ENCODE measurements at regions of chr6 and their contacts with region 1.

Region 1: DNA sequence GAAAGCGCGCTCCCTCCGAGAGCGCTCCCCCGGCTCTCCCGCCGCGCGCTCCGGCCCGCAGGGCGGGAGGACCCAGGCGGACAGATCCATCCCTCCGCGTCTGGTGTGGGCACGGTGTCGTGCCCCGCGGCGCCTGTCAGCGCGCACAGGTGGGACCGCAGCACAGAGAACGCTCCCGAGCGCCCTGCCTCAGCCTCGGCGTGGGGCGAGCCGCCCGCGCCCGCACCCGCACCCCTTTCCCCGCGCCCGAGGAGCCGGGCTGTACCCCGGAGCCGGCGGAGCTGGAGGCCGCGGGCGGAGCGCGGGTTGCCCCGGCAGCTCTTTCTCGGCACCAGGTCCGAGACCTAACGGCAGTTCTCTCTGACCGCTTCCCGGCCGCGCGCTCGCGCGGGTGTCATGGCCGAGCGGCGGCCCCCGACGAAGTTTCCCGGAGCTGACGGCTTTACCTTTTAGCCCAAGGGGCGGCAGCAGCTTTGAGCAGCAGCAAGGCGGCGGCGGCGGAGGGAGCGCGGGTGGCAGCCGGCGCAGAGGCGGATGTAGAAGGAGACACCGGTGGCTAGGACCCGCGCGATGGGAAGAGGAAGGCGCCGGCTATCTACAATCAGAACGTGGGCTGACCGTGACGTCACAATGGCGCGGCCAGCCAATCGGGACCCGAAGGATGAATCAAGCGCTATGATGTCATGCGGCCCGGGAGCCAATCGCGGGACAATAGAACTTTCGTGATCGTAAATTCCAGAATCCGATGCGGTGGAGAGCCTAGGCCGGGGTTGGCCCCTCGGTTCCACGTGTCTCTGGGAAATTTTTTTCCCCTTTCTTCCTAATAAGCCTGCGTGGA is at the start of gene ELOVL5:
- DNase-seq: peak; percentile 82 to 99 (median 93)
- ATAC-seq: peak; percentile 76
- H3K4me3 ChIP-seq: peak within 1 kb of the TSS; percentile 83 to 91
- H3K4me3 Mint-ChIP-seq: peak within 1 kb of the TSS; percentile 96
- H3K27ac ChIP-seq: peak within 1 kb of the TSS; percentile 80 to 94
- H3K27ac Mint-ChIP-seq: peak within 1 kb of the TSS; percentile 96
- H3K4me1 ChIP-seq: peaks cover 38% of the 10 kb centered on the region
- H3K4me1 Mint-ChIP-seq: peaks cover 48% of the 10 kb centered on the region
- H3K27me3 ChIP-seq: no peaks in the 10 kb centered on the region
- H3K27me3 Mint-ChIP-seq: no peaks in the 10 kb centered on the region
- CTCF ChIP-seq: no peak
- total RNA-seq, gene ELOVL5: 79.1 to 82.7 TPM

Region 2: GRCh38 chr6:52995913-52996645 is 352.5 kb before region 1 on chr6:
- CTCF ChIA-PET with region 1: no interaction called
- POLR2A ChIA-PET with region 1: interaction called, 7 read pairs
- intact Hi-C with region 1: loop called in 1 of 2 experiments (anchors 5 kb)
- DNase-seq: peak in 7 of 9 experiments; percentile 27 to 74 (median 54)
- ATAC-seq: peak; percentile 8
- H3K4me3 ChIP-seq: peak overlapping the region; percentile 41 to 75
- H3K4me3 Mint-ChIP-seq: peak overlapping the region; percentile 94
- H3K27ac ChIP-seq: peak overlapping the region; percentile 57 to 100
- H3K27ac Mint-ChIP-seq: peak overlapping the region; percentile 99
- H3K4me1 ChIP-seq: peaks cover 6% of the 10 kb centered on the region
- H3K4me1 Mint-ChIP-seq: peaks cover 22% of the 10 kb centered on the region
- H3K27me3 ChIP-seq: no peaks in the 10 kb centered on the region
- H3K27me3 Mint-ChIP-seq: peaks cover 7% of the 10 kb centered on the region
- CTCF ChIP-seq: no peak

Region 3: GRCh38 chr6:53134601-53135235 is 213.9 kb before region 1 on chr6:
- CTCF ChIA-PET with region 1: no interaction called
- POLR2A ChIA-PET with region 1: no interaction called
- intact Hi-C with region 1: no loop called
- DNase-seq: no peak
- ATAC-seq: no peak
- H3K4me3 ChIP-seq: no peak overlapping the region
- H3K4me3 Mint-ChIP-seq: no peak overlapping the region
- H3K27ac ChIP-seq: no peak overlapping the region
- H3K27ac Mint-ChIP-seq: no peak overlapping the region
- H3K4me1 ChIP-seq: peaks cover 4% of the 10 kb centered on the region
- H3K4me1 Mint-ChIP-seq: peaks cover 4% of the 10 kb centered on the region
- H3K27me3 ChIP-seq: no peaks in the 10 kb centered on the region
- H3K27me3 Mint-ChIP-seq: peaks cover 10% of the 10 kb centered on the region
- CTCF ChIP-seq: no peak

Region 4: DNA sequence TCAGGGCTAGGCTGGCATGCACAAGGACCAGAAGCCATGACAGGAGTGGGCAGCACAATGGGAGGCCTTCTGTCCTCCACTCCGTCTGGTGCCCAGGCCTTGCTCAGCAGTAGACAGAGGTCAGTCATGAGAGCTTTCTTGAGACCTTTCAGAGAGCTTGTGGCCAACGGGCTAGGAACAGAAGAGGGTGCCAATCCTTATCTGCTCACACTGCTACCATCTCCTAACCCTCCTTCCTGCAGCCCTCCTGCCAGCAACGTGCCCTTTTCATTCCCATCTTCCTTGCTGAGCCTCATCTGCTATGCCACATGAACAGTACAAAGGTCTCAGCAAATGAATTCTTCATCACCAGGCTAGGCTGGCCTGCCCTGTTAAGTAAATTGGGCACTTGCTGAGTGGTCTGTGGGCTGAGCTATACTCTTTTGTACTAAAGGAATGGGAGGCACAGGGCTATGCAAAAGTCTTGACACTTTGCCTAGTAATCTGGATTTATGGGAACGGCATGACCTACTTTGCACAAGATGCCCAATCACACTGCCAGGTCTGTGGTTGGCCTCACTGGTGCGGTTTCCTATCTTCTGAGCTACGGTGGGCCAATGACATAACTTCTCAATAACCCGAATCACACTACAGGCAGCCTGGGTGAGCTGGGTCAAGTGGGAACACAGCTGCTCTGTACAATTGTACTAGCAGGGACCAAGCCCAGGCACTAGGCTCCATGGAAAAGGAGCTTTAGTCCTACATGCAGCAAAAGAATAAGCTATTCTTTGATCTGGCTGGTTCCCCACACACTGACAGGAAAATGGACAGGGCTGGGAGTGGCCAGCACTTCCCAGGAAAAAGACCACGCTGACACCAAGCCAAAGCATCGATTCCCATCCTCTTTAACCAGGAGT is 47.7 kb before region 1 on chr6:
- CTCF ChIA-PET with region 1: interaction called, 6 read pairs
- POLR2A ChIA-PET with region 1: interaction called, 22 read pairs
- intact Hi-C with region 1: loop called in 1 of 2 experiments (anchors 2 kb)
- DNase-seq: peak in 5 of 9 experiments; percentile 29 to 72 (median 44)
- ATAC-seq: peak; percentile 22
- H3K4me3 ChIP-seq: no peak overlapping the region
- H3K4me3 Mint-ChIP-seq: peak overlapping the region; percentile 49
- H3K27ac ChIP-seq: no peak overlapping the region
- H3K27ac Mint-ChIP-seq: peak overlapping the region; percentile 89
- H3K4me1 ChIP-seq: peaks cover 39% of the 10 kb centered on the region
- H3K4me1 Mint-ChIP-seq: peaks cover 77% of the 10 kb centered on the region
- H3K27me3 ChIP-seq: no peaks in the 10 kb centered on the region
- H3K27me3 Mint-ChIP-seq: no peaks in the 10 kb centered on the region
- CTCF ChIP-seq: no peak

Region 5: DNA sequence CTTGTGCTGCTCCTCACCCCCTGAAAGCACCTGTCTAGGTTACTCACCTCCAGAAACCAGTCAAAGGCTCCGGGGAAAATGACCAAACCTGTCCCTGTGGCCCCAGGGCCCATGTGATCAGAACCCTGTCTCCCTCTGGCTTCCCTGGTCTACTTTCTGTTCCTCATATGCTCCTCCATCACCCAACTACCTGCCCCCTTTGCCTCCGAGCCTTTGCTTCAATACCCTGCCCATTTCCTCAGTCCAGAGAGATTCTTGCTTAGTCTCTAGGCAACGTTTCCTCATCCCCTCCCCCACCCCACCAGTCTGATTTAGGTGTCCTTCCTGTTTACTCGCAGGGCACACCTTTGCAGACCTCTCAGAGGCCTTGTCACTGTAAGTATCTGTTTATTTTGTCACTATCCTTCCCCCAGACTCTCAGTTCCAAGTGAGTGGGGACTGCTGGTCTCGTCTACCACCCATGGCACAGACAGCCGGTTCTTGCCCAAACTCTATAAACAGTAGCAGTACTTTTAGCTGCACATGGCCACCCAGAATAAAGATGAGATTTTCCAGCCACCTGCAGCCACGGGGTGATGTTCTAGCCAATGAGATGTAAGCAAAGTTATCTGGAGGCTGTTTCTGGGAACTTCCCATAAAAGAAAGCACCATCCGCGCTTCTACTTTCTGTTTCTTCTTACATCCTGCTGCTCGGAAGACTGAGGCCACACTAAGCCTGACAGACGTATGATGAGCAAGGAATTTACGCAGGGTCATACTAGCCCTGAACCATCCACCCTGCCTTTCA is 13.2 kb before region 1 on chr6:
- CTCF ChIA-PET with region 1: interaction called, 19 read pairs
- POLR2A ChIA-PET with region 1: interaction called, 57 read pairs
- intact Hi-C with region 1: loop called (anchors 1 to 2 kb)
- DNase-seq: peak; percentile 52 to 94 (median 76)
- ATAC-seq: peak; percentile 83
- H3K4me3 ChIP-seq: peak overlapping the region; percentile 38 to 54
- H3K4me3 Mint-ChIP-seq: peak overlapping the region; percentile 84
- H3K27ac ChIP-seq: peak overlapping the region; percentile 82 to 98
- H3K27ac Mint-ChIP-seq: peak overlapping the region; percentile 98
- H3K4me1 ChIP-seq: peaks cover 76% of the 10 kb centered on the region
- H3K4me1 Mint-ChIP-seq: peaks cover 91% of the 10 kb centered on the region
- H3K27me3 ChIP-seq: no peaks in the 10 kb centered on the region
- H3K27me3 Mint-ChIP-seq: no peaks in the 10 kb centered on the region
- CTCF ChIP-seq: no peak

Region 6: DNA sequence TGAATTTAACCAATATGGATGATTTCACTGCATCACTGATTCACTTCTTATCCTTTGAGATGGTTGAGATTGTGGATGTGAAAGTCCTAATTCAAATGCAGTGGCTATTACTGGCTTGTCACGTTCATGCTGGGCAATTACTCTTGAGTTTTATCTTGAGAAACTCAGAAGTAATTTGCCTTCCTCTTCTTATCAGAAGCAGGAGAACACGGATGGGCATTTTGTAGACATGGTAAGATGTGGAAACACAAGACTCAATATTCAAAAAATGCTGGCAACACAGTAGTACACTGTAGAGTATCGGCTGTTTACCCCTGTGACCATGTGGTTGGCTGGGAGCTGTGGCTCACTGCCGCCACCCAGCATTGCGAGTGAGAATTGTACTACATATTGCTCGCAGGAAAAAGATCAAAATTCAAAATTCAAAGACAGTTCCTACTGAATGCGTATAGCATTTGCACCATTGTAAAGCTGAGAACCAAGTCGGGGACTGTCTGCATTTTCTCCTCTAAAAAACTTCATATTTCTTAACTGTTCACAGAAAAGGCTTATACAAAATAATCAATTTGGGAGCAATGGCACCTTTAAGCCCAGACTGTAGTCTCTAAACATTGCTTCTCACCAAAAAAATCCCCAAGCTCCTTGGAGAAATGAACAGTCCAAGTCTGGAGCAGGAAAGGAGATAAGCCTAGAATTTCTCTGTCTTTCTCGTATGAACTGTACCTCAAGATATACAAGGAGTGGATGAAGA is 62.1 kb after region 1 on chr6:
- CTCF ChIA-PET with region 1: interaction called, 5 read pairs
- POLR2A ChIA-PET with region 1: no interaction called
- intact Hi-C with region 1: loop called in 1 of 2 experiments (anchors 1 kb)
- DNase-seq: peak; percentile 22 to 75 (median 56)
- ATAC-seq: peak; percentile 99
- H3K4me3 ChIP-seq: no peak overlapping the region
- H3K4me3 Mint-ChIP-seq: no peak overlapping the region
- H3K27ac ChIP-seq: no peak overlapping the region
- H3K27ac Mint-ChIP-seq: no peak overlapping the region
- H3K4me1 ChIP-seq: no peaks in the 10 kb centered on the region
- H3K4me1 Mint-ChIP-seq: peaks cover 4% of the 10 kb centered on the region
- H3K27me3 ChIP-seq: peaks cover 0 to 3% of the 10 kb centered on the region in 2 experiments
- H3K27me3 Mint-ChIP-seq: no peaks in the 10 kb centered on the region
- CTCF ChIP-seq: peak; percentile 85

Region 7: GRCh38 chr6:53651764-53652401 is 303.3 kb after region 1 on chr6:
- CTCF ChIA-PET with region 1: no interaction called
- POLR2A ChIA-PET with region 1: no interaction called
- intact Hi-C with region 1: loop called in 1 of 2 experiments (anchors 5 kb)
- DNase-seq: peak; percentile 57 to 91 (median 79)
- ATAC-seq: peak; percentile 86
- H3K4me3 ChIP-seq: peak overlapping the region; percentile 67 to 81
- H3K4me3 Mint-ChIP-seq: peak overlapping the region; percentile 91
- H3K27ac ChIP-seq: peak overlapping the region; percentile 54 to 65
- H3K27ac Mint-ChIP-seq: peak overlapping the region; percentile 89
- H3K4me1 ChIP-seq: peaks cover 32% of the 10 kb centered on the region
- H3K4me1 Mint-ChIP-seq: peaks cover 32% of the 10 kb centered on the region
- H3K27me3 ChIP-seq: no peaks in the 10 kb centered on the region
- H3K27me3 Mint-ChIP-seq: no peaks in the 10 kb centered on the region
- CTCF ChIP-seq: no peak